Endothelial cell of umbilical vein (primary cell): ENCODE measurements at regions of chr9 and their contacts with region 1.

Region 1: DNA sequence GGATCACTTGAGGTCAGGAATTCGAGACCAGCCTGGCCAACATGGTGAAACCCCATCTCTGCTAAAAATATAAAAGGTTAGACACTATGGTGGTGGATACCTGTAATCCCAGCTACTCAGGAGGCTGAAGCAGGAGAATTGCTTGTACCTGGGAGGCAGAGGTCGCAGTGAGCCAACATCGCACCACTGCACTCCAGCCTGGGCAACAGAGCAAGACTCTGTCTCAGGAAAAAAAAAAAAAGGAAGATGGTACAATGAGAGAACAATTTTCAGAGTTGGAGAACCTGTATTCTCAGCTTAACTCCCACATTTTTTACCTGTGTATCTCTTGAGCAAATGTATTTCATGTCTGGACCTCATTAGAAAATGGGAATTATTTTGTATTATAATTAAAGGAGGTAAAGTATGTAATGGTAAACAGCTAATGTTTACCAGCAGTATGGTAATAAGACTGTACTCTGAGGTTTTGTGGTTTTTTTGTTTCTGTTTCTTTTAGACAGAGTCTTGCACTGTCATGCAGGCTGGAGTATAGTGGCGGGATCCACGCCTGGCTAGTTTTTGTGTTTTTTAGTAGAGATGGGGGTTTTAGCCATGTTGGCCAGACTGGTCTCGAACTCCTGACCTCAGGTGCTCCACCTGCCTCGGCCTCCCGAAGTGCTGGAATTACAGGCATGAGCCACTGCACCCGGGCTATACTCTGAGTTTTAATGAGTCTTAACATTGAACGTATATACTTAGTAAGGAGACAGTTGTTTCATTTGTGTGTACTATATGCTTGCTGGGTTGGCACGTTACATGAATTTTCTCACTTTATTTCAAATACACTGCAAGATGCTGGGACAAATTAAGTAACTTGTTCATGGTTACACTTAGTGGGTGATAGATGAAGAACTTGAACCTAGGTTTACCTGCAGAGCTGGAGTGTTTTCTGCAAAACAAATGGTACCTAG is 16.2 kb downstream of the UHRF2 start:
- DNase-seq: no peak
- H3K4me3 ChIP-seq: no peak overlapping the region
- H3K27ac ChIP-seq: no peak overlapping the region
- H3K4me1 ChIP-seq: peaks cover 37% of the 10 kb centered on the region
- H3K27me3 ChIP-seq: no peaks in the 10 kb centered on the region
- CTCF ChIP-seq: no peak
- POLR2A ChIP-seq: no peak

Region 2: GRCh38 chr9:6449645-6450044 is 20.4 kb after region 1 on chr9:
- CTCF ChIA-PET with region 1: interaction called, 3 read pairs
- POLR2A ChIA-PET with region 1: no interaction called
- dilution Hi-C with region 1: no loop called
- intact Hi-C with region 1: loop called (anchors 2 kb)
- DNase-seq: peak; percentile 42
- H3K4me3 ChIP-seq: no peak overlapping the region
- H3K27ac ChIP-seq: peak overlapping the region; percentile 66
- H3K4me1 ChIP-seq: peaks cover 38% of the 10 kb centered on the region
- H3K27me3 ChIP-seq: no peaks in the 10 kb centered on the region
- CTCF ChIP-seq: no peak
- POLR2A ChIP-seq: no peak

Region 3: GRCh38 chr9:6488395-6488794 is 59.2 kb after region 1 on chr9:
- CTCF ChIA-PET with region 1: no interaction called
- POLR2A ChIA-PET with region 1: no interaction called
- dilution Hi-C with region 1: no loop called
- intact Hi-C with region 1: loop called (anchors 5 kb)
- DNase-seq: no peak
- H3K4me3 ChIP-seq: no peak overlapping the region
- H3K27ac ChIP-seq: no peak overlapping the region
- H3K4me1 ChIP-seq: no peaks in the 10 kb centered on the region
- H3K27me3 ChIP-seq: no peaks in the 10 kb centered on the region
- CTCF ChIP-seq: no peak
- POLR2A ChIP-seq: no peak